ENCODE measurements at regions of chr1 and their contacts with region 1.

Region 1: DNA sequence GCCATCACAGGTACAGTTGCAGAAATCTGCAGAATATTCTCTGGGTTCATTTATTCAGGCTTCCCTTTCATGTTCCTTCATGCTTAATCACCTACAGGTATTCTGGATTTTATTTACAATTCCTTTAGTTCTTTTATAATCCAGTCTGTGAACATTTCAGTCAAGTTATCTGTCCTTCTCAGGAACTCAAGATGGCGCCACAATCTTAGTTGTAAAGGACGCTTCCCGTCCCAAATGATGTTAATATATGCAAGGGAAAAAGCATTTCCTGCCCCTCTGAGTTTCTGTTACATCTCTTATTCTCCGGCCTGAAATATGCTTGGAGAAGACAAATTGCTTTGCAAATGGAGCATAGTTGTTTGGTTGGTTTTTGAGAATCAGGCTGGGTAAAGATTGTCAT is 19.3 kb downstream of the F3 start:
- DNase-seq: no peak
- ATAC-seq: peak in 3 of 4 donors; percentile 54 to 74 (median 71)
- H3K4me3 ChIP-seq: no peak overlapping the region
- H3K27ac ChIP-seq: no peak overlapping the region
- H3K4me1 ChIP-seq: peaks cover 0 to under 1% (median 0%) of the 10 kb centered on the region in 3 donors
- H3K27me3 ChIP-seq: no peaks in the 10 kb centered on the region
- CTCF ChIP-seq: no peak

Region 2: DNA sequence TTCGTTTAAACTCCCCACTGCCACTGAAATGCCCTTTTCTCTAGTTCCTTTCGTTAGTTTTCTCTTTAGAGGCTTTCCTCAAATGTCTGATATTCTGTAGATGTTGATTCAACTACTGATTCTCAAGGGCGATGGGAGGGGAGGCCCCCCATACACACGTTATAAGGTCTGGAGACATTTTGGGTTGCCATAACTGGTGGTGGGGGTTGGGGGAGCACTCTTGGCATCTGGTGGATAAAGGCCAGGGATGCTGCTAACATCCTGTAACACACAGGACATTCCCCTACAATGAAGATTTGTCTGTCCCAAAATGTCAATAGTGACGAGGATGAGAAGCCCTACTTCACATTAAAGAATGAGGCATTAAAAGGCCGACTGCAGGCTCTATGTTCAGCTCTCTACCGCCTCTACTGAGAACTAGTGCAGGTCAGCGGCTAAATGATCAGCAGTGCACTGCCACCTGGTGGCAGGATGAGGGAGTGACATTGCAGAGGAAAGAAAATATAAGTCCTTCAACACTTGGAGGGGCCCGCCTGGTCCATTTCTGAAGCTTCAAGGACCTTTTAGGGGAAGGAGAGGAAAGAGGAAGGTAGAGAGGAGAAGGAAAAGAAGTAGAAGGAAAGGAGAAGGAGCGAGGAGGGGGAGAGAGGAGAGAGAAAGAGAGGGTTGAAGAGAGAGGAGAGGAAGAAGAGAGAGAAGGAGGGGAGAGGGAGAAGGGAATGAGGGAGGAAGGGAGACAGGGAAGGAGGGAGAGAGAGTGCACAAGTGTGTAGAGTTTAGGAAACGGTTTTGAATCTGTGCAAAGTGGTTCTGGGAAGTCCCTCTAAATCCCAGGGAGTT is 521.1 kb after region 1 on chr1:
- intact Hi-C with region 1: loop called in 1 of 3 experiments (anchors 10 kb)
- DNase-seq: peak; percentile 70 to 86 (median 76)
- ATAC-seq: peak; percentile 81 to 97 (median 92)
- H3K4me3 ChIP-seq: no peak overlapping the region
- H3K27ac ChIP-seq: peak overlapping the region in 1 of 4 donors; percentile 64
- H3K4me1 ChIP-seq: peaks cover 0 to 15% (median 9%) of the 10 kb centered on the region in 3 donors
- H3K27me3 ChIP-seq: no peaks in the 10 kb centered on the region
- CTCF ChIP-seq: peak; percentile 93 to 98 (median 97)